Prostate gland (tissue), 2 donors: ENCODE measurements at regions of chr6 and their contacts with region 1.

Region 1: DNA sequence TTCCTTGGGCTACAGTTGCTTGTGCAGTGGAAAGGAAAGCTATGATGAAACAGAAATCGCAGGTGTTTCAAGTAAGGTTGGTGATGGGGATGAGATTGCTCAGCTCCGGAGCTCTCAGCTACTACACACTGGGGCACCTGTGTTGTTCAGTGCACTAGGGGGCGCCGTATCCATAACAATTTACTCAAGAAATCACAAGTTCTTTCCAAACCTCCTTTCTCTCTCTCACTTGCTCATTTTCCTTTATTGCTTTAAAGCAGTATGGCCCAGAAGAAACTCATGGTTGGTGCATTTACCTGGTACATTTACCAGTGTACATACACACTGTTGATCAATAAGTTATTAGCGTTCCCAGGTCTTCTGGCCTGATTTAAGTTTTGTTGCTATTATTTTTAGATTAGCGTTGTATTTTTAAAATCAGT is 235.2 kb upstream of the TAB2 start:
- DNase-seq: peak; percentile 87
- H3K4me3 ChIP-seq: no peak overlapping the region
- H3K27ac ChIP-seq: no peak overlapping the region
- H3K4me1 ChIP-seq: peaks cover 4% of the 10 kb centered on the region
- H3K27me3 ChIP-seq: no peaks in the 10 kb centered on the region
- CTCF ChIP-seq: peak; percentile 25 to 85 (median 80)
- POLR2A ChIP-seq: no peak

Region 2: GRCh38 chr6:149316798-149317655 is 234.7 kb after region 1 on chr6:
- intact Hi-C with region 1: loop called (anchors 10 kb)
- DNase-seq: peak; percentile 83
- H3K4me3 ChIP-seq: peak overlapping the region; percentile 93 to 95
- H3K27ac ChIP-seq: peak overlapping the region; percentile 97 to 98
- H3K4me1 ChIP-seq: peaks cover 4% of the 10 kb centered on the region
- H3K27me3 ChIP-seq: no peaks in the 10 kb centered on the region
- CTCF ChIP-seq: peak in 2 of 4 experiments; percentile 15 to 28
- POLR2A ChIP-seq: peak; percentile 72

Region 3: GRCh38 chr6:149431905-149432775 is 349.8 kb after region 1 on chr6:
- intact Hi-C with region 1: loop called (anchors 2 kb)
- DNase-seq: peak; percentile 87
- H3K4me3 ChIP-seq: no peak overlapping the region
- H3K27ac ChIP-seq: no peak overlapping the region
- H3K4me1 ChIP-seq: no peaks in the 10 kb centered on the region
- H3K27me3 ChIP-seq: no peaks in the 10 kb centered on the region
- CTCF ChIP-seq: peak; percentile 89 to 95 (median 94)
- POLR2A ChIP-seq: no peak

Region 4: DNA sequence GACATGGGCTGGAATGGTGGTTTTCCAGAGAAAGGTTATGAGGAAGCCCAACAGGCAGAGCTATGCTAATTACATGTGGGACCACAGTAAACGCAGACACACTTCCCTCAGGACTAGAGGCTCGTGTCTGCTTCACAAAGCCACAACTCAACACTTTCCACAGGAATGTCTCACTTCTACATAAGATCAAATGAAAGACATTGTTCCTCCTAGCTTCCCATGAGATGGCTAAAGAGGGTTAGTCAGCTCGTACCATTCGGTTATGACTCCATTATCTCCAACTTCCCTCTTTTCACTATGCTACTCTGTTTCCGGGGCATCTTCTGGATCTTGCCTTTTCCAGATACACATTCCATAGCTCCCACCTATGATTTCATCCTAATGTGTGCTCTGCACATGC is 431.6 kb after region 1 on chr6:
- intact Hi-C with region 1: loop called (anchors 2 kb)
- DNase-seq: no peak
- H3K4me3 ChIP-seq: no peak overlapping the region
- H3K27ac ChIP-seq: no peak overlapping the region
- H3K4me1 ChIP-seq: no peaks in the 10 kb centered on the region
- H3K27me3 ChIP-seq: no peaks in the 10 kb centered on the region
- CTCF ChIP-seq: no peak
- POLR2A ChIP-seq: no peak